Heart right ventricle (tissue), 16 donors: ENCODE measurements at regions of chr16 and their contacts with region 1.

Region 1: DNA sequence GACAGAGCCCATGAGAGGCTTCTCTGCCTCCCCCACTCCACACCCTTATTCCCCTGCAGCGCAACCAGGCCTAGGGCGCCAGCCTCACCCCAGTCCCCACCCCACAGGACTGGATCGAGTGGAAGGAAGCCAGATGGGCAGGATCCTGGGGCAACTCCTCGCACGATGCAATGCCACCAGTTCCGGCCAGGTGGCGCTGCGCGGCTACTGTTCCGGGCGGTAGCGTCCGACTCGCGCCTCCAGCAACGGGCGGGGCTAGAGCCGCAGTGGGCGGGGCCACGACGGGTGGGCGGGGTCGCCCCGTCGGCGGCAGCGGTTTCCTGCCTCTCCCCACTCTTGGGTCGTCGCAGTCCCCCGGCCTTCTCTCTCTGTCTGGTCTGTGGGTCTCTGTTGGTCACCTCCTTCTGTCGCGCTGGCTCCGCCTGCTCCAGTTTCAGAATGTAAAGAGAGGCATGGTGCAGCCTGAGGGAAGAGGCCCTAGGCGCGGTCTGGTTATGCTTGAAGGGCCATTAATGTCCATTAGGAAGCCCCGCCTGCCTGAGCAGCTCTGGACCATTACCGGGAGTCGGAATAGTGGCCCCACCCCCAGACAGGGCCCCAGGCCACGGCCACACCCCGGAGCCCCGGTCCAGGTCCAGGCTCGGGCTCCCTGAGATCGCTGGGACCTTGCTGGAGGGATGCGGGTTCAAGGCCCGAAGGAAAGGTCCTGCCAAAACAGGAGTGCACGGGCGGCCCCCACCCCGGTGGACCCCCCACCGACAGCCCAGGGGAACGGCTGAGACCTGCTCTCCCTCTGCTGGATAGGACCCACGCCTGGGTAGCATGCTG is 3.4 kb upstream of the NHERF2 start:
- DNase-seq: peak; percentile 94 to 97
- ATAC-seq: peak; percentile 86 to 94 (median 91)
- H3K4me3 ChIP-seq: peak overlapping the region in 9 of 10 donors; percentile 18 to 50 (median 43)
- H3K27ac ChIP-seq: peak overlapping the region; percentile 72 to 98 (median 84)
- H3K4me1 ChIP-seq: peaks cover 25 to 65% (median 53%) of the 10 kb centered on the region in 9 donors
- H3K27me3 ChIP-seq: peaks cover 16 to 68% (median 36%) of the 10 kb centered on the region in 7 donors
- CTCF ChIP-seq: peak; percentile 86 to 99 (median 97)

Region 2: GRCh38 chr16:2047330-2048115 is 24.2 kb after region 1 on chr16 and contains the starts of genes NTHL1 and TSC2:
- intact Hi-C with region 1: loop called in 2 of 10 experiments (anchors 1 to 2 kb)
- DNase-seq: peak; percentile 97
- ATAC-seq: peak; percentile 89 to 95 (median 92)
- H3K4me3 ChIP-seq: peak within 1 kb of the TSS; percentile 51 to 97 (median 88)
- H3K27ac ChIP-seq: peak within 1 kb of the TSS; percentile 64 to 96 (median 84)
- H3K4me1 ChIP-seq: peaks cover 16 to 64% (median 50%) of the 10 kb centered on the region in 9 donors
- H3K27me3 ChIP-seq: no peaks in the 10 kb centered on the region
- CTCF ChIP-seq: peak in 8 of 9 donors; percentile 28 to 73 (median 63)
- total RNA-seq, gene NTHL1: 9.8 to 24.9 (median 12.3) TPM
- total RNA-seq, gene TSC2: 54.7 to 87.0 (median 71.5) TPM

Region 3: GRCh38 chr16:2056681-2057407 is 33.5 kb after region 1 on chr16:
- intact Hi-C with region 1: loop called in 3 of 10 experiments (anchors 5 to 10 kb)
- DNase-seq: no peak
- ATAC-seq: peak in 3 of 8 donors; percentile 15 to 56 (median 17)
- H3K4me3 ChIP-seq: no peak overlapping the region
- H3K27ac ChIP-seq: no peak overlapping the region
- H3K4me1 ChIP-seq: peaks cover 0 to 4% (median 0%) of the 10 kb centered on the region in 9 donors
- H3K27me3 ChIP-seq: no peaks in the 10 kb centered on the region
- CTCF ChIP-seq: peak in 3 of 9 donors; percentile 6 to 27 (median 11)

Region 4: DNA sequence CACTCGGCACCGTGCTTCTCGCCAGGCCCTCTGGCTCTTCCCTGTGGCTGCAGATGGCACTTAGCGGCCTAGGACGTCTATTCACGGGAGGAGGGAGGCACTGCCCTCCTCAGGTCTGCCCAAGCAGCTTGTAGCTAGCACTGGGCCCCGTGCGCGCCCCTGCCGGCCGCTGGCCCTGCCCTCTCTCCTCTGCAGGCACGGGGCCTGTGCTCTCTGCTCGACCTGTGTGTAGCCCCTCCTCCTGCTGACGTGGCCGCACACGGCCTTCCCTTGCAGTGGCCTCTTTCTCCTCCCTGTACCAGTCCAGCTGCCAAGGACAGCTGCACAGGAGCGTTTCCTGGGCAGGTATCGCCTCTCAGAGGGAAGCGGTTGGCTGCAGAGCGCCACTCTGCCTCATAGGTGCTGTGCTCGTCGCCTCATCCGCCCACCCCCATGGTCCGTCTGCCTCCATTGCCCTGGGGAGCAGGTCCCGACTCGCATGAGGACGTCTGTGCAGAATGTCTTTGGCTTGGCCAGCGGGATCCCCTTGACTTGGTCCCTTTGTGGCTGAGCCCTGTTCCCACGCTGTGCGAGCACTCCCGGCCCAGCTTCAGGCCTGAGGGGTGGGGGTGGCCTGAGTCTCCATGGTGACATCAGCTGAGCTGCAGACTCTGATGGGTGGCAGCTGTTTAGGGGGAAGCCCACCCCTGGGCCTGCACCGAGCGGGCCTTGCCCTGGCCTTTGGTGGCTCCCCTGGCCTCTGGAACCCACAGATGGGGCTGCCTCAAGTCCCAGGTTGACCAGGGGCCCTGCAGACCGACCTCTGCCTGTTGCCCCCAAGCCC is 59.1 kb after region 1 on chr16:
- intact Hi-C with region 1: loop called in 1 of 10 experiments (anchors 10 kb)
- DNase-seq: peak; percentile 34 to 43
- ATAC-seq: peak; percentile 20 to 53 (median 33)
- H3K4me3 ChIP-seq: no peak overlapping the region
- H3K27ac ChIP-seq: peak overlapping the region in 8 of 10 donors; percentile 12 to 64 (median 50)
- H3K4me1 ChIP-seq: peaks cover 5 to 33% (median 28%) of the 10 kb centered on the region in 9 donors
- H3K27me3 ChIP-seq: no peaks in the 10 kb centered on the region
- CTCF ChIP-seq: peak in 4 of 9 donors; percentile 11 to 27 (median 16)

Region 5: GRCh38 chr16:2147981-2148671 is 124.8 kb after region 1 on chr16 and contains the start of gene RAB26:
- intact Hi-C with region 1: loop called in 3 of 10 experiments (anchors 2 to 5 kb)
- DNase-seq: peak; percentile 84
- ATAC-seq: peak; percentile 82 to 93 (median 90)
- H3K4me3 ChIP-seq: peak within 1 kb of the TSS; percentile 29 to 64 (median 53)
- H3K27ac ChIP-seq: peak within 1 kb of the TSS; percentile 13 to 91 (median 82)
- H3K4me1 ChIP-seq: peaks cover 20 to 58% (median 52%) of the 10 kb centered on the region in 9 donors
- H3K27me3 ChIP-seq: peaks cover 0 to 14% (median 0%) of the 10 kb centered on the region in 7 donors
- CTCF ChIP-seq: no peak
- total RNA-seq, gene RAB26: 0.74 to 4.3 (median 1.6) TPM

Region 6: GRCh38 chr16:2155091-2156021 is 132.0 kb after region 1 on chr16 and contains the start of gene TRAF7:
- intact Hi-C with region 1: loop called in 2 of 10 experiments (anchors 2 to 5 kb)
- DNase-seq: peak; percentile 98 to 100
- ATAC-seq: peak; percentile 90 to 96 (median 94)
- H3K4me3 ChIP-seq: peak within 1 kb of the TSS; percentile 53 to 92 (median 80)
- H3K27ac ChIP-seq: peak within 1 kb of the TSS in 9 of 10 donors; percentile 64 to 89 (median 86)
- H3K4me1 ChIP-seq: peaks cover 39 to 89% (median 77%) of the 10 kb centered on the region in 9 donors
- H3K27me3 ChIP-seq: no peaks in the 10 kb centered on the region
- CTCF ChIP-seq: no peak
- total RNA-seq, gene TRAF7: 16.9 to 44.9 (median 23.8) TPM

Region 7: DNA sequence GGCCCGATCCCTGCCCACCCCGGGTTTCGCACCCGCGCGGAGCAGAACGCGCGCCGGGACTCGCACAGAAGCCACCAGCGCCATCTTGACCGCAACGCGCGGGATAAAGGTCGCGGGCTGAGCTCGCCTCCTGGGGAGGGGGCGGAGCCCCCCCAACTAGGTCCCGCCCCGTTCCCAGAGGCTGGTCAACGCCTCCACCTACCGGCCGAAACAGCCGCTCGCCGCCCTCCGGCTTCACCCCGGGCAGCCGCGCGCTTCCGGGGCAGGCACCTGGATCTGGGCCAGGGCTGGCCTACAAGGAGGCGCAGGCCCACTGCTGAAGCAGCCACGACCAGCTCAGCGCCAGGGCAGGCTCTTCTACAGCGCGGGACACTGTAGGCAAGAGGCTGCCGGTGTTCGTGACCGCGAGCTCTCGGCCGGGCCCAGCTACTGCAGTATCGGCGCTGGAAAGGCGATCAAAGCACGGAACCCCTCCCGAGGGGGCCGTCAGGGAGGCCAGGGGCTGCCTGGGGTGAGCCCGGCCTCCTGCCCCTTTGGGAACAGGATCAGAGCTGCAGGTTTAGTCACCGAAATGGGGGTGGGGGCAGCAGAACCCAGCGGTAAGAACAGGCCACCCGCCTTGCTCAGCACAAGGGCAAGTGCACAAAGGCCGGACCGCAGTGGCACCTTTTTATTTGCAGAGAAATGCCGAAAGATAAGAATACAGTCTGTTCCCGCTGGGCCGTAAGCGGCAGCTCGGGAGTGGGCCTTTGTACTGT is 228.3 kb after region 1 on chr16 and contains the start of gene ECI1:
- intact Hi-C with region 1: loop called in 1 of 10 experiments (anchors 10 kb)
- DNase-seq: peak; percentile 96 to 99
- ATAC-seq: peak; percentile 96 to 99 (median 98)
- H3K4me3 ChIP-seq: peak within 1 kb of the TSS; percentile 46 to 99 (median 76)
- H3K27ac ChIP-seq: peak within 1 kb of the TSS; percentile 82 to 98 (median 94)
- H3K4me1 ChIP-seq: peaks cover 7 to 28% (median 18%) of the 10 kb centered on the region in 9 donors
- H3K27me3 ChIP-seq: no peaks in the 10 kb centered on the region
- CTCF ChIP-seq: peak; percentile 57 to 94 (median 79)
- total RNA-seq, gene ECI1: 118 to 243 (median 153) TPM